AG04449 (cell line): ENCODE measurements at regions of chr15 and their contacts with region 1.

Region 1: GRCh38 chr15:68924866-68925560 is 5.3 kb upstream of the SPESP1 start:
- DNase-seq: peak; percentile 10
- H3K4me3 ChIP-seq: no peak overlapping the region
- CTCF ChIP-seq: peak; percentile 88

Region 2: DNA sequence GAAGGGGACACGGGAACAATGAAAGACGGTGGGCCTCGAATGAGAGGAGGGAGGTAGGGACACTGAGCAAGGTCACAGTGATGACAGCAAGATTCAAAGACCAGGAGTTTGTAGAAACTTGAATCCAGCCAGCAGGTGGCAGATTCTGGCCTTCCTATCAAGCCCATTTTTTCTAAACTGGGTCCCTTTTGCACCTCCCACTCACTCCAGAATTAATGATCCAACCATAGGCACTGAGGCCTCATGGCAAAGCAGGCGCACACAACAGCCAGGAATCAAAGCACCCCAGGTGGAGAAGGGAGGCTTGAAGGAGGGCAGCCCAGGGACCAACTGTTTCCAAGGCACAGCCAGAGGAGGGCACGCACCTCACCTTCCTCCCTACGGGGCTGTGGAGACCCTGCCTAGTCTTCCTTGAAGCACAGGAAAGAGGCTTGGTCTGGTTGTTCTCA is 194.5 kb before region 1 on chr15:
- CTCF ChIA-PET with region 1: interaction called, 13 read pairs
- POLR2A ChIA-PET with region 1: interaction called, 3 read pairs
- DNase-seq: no peak
- H3K4me3 ChIP-seq: no peak overlapping the region
- CTCF ChIP-seq: peak; percentile 44

Region 3: GRCh38 chr15:68749793-68750192 is 175.2 kb before region 1 on chr15:
- CTCF ChIA-PET with region 1: no interaction called
- POLR2A ChIA-PET with region 1: no interaction called
- DNase-seq: no peak
- H3K4me3 ChIP-seq: no peak overlapping the region
- CTCF ChIP-seq: no peak

Region 4: GRCh38 chr15:68885070-68885469 is 39.9 kb before region 1 on chr15:
- CTCF ChIA-PET with region 1: interaction called, 11 read pairs
- POLR2A ChIA-PET with region 1: no interaction called
- DNase-seq: peak; percentile 31
- H3K4me3 ChIP-seq: no peak overlapping the region
- CTCF ChIP-seq: no peak

Region 5: GRCh38 chr15:68909601-68910100 is 15.4 kb before region 1 on chr15:
- CTCF ChIA-PET with region 1: interaction called, 36 read pairs
- POLR2A ChIA-PET with region 1: no interaction called
- DNase-seq: no peak
- H3K4me3 ChIP-seq: no peak overlapping the region
- CTCF ChIP-seq: no peak

Region 6: DNA sequence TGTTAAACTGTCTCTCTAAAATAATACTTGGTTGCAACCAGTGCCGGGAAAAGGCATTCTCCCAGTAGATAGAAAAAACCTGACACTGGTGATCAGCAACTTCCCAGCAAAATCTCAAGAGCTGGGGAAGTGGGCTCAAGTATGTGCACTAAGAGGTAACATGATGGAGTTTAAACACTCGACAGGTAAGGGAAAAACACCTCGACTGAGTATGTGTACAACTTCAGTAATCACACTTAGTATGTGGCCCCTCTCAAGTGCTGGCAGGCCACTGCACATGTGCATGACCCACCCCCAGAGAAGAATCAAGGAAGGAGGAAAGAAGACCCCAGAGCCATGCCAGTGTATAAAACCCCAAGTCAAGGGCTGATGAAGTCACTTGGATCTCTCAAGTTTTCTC is 32.7 kb after region 1 on chr15:
- CTCF ChIA-PET with region 1: no interaction called
- POLR2A ChIA-PET with region 1: no interaction called
- DNase-seq: no peak
- H3K4me3 ChIP-seq: no peak overlapping the region
- CTCF ChIP-seq: no peak